ENCODE measurements at regions of chr18 and their contacts with region 1.

Region 1: DNA sequence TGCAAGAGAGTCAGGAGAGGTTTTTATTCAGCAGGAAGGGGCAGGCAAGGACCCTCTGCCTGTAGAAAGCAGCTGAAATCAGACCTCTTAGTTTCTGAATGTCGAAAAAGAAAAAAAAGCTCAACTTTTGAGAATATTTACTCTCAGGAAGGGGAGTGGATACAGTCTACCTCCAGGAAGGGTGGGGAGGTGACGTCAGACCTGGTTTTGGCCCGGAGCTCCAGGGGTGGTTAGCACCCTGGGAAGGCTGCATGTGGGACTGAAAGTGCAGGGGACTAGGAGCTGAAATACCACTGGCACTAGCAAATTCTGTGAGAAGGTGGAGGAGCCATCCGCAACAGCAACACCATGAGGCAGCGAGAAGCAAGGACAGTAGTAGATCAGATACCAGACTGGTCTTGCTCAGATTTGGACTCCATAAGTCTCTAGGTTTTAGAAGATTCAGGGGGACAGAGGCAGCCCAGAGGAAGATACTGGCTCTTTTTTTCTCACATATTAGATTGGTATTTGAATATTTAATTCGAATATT is 19.8 kb downstream of the MC2R start:
- DNase-seq: peak; percentile 84
- H3K4me3 ChIP-seq: no peak overlapping the region
- H3K27ac ChIP-seq: no peak overlapping the region
- H3K4me1 ChIP-seq: no peaks in the 10 kb centered on the region
- H3K27me3 ChIP-seq: peaks cover 0 to 11% (median 0%) of the 10 kb centered on the region in 4 donors
- CTCF ChIP-seq: no peak
- EP300 ChIP-seq: no peak
- POLR2A ChIP-seq: no peak

Region 2: GRCh38 chr18:13710460-13710859 is 185.1 kb before region 1 on chr18:
- intact Hi-C with region 1: no loop called
- DNase-seq: no peak
- H3K4me3 ChIP-seq: no peak overlapping the region
- H3K27ac ChIP-seq: no peak overlapping the region
- H3K4me1 ChIP-seq: peaks cover 0 to 22% (median 7%) of the 10 kb centered on the region in 4 donors
- H3K27me3 ChIP-seq: no peaks in the 10 kb centered on the region
- CTCF ChIP-seq: no peak
- EP300 ChIP-seq: no peak
- POLR2A ChIP-seq: no peak

Region 3: GRCh38 chr18:13912601-13913000 is 17.0 kb after region 1 on chr18:
- intact Hi-C with region 1: loop called (anchors 2 kb)
- DNase-seq: peak; percentile 84
- H3K4me3 ChIP-seq: no peak overlapping the region
- H3K27ac ChIP-seq: no peak overlapping the region
- H3K4me1 ChIP-seq: peaks cover 0 to 18% (median 10%) of the 10 kb centered on the region in 4 donors
- H3K27me3 ChIP-seq: no peaks in the 10 kb centered on the region
- CTCF ChIP-seq: no peak
- EP300 ChIP-seq: no peak
- POLR2A ChIP-seq: no peak